ENCODE measurements at regions of chr7 and their contacts with region 1.

Region 1: GRCh38 chr7:47724335-47724982 is 142.5 kb upstream of the TNS3 start:
- DNase-seq: peak; percentile 77
- H3K4me3 Mint-ChIP-seq: peak overlapping the region; percentile 14
- H3K27ac Mint-ChIP-seq: peak overlapping the region; percentile 68
- H3K4me1 Mint-ChIP-seq: peaks cover 51% of the 10 kb centered on the region
- H3K27me3 Mint-ChIP-seq: no peaks in the 10 kb centered on the region
- CTCF ChIP-seq: no peak

Region 2: GRCh38 chr7:47581806-47582763 is 142.4 kb before region 1 on chr7 and contains the start of gene TNS3:
- CTCF ChIA-PET with region 1: no interaction called
- intact Hi-C with region 1: loop called (anchors 2 kb)
- DNase-seq: peak; percentile 86
- H3K4me3 Mint-ChIP-seq: peak within 1 kb of the TSS; percentile 100
- H3K27ac Mint-ChIP-seq: peak within 1 kb of the TSS; percentile 88
- H3K4me1 Mint-ChIP-seq: peaks cover 55% of the 10 kb centered on the region
- H3K27me3 Mint-ChIP-seq: no peaks in the 10 kb centered on the region
- CTCF ChIP-seq: peak; percentile 36
- total RNA-seq, gene TNS3: 102 and 135 TPM in 2 replicates

Region 3: GRCh38 chr7:47605816-47606575 is 118.5 kb before region 1 on chr7:
- CTCF ChIA-PET with region 1: interaction called, 4 read pairs
- intact Hi-C with region 1: loop called (anchors 1 kb)
- DNase-seq: no peak
- H3K4me3 Mint-ChIP-seq: no peak overlapping the region
- H3K27ac Mint-ChIP-seq: peak overlapping the region; percentile 88
- H3K4me1 Mint-ChIP-seq: peaks cover 67% of the 10 kb centered on the region
- H3K27me3 Mint-ChIP-seq: no peaks in the 10 kb centered on the region
- CTCF ChIP-seq: no peak

Region 4: DNA sequence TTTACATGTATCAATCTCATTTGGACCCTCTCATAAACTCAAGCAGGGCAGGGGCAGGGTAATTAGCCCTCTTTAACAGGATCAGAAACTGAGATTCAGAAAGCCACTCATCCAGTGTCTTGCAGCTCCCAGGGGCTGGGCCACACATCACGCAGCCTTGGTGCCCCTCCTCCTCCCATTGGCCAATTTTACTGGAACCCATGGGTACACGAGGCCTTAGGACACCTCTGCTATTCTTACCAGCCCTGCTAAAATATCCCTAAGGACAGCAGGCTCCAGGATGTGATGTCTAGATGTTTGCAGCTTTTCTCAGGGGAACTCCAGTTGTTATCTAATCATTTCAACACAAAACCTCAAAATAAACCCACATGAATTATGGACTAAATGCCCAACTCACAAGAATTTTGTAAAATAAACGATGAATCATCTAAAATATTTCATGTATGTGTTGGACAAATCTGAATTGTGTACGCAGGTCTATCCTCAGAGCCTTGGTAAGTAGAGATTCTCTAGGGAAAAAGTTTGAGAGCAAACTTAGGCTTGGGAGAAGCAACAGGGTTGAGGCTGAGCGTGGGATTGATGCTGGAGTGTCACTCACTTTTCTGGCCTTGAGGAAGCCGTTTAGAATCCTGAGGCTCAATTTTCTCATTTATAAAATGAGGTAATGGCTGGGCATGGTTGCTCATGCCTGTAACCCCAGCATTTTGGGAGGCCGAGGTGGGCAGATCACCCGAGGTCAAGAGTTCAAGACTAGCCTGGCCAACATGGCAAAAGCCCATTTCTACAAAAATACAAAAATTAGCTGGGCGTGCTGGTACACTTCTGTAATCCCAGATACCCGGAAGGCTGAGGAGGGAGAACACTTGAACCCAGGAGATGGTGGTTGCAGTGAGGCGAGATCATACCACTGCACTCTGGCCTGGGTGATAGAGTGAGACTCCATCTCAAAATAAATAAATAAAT is 72.8 kb before region 1 on chr7:
- CTCF ChIA-PET with region 1: no interaction called
- intact Hi-C with region 1: loop called (anchors 5 kb)
- DNase-seq: peak; percentile 30
- H3K4me3 Mint-ChIP-seq: no peak overlapping the region
- H3K27ac Mint-ChIP-seq: no peak overlapping the region
- H3K4me1 Mint-ChIP-seq: peaks cover 25% of the 10 kb centered on the region
- H3K27me3 Mint-ChIP-seq: no peaks in the 10 kb centered on the region
- CTCF ChIP-seq: no peak

Region 5: GRCh38 chr7:47710201-47710935 is 14.1 kb before region 1 on chr7:
- CTCF ChIA-PET with region 1: no interaction called
- intact Hi-C with region 1: no loop called
- DNase-seq: no peak
- H3K4me3 Mint-ChIP-seq: no peak overlapping the region
- H3K27ac Mint-ChIP-seq: no peak overlapping the region
- H3K4me1 Mint-ChIP-seq: no peaks in the 10 kb centered on the region
- H3K27me3 Mint-ChIP-seq: no peaks in the 10 kb centered on the region
- CTCF ChIP-seq: no peak

Region 6: GRCh38 chr7:47763063-47763974 is 38.9 kb after region 1 on chr7:
- CTCF ChIA-PET with region 1: interaction called, 5 read pairs
- intact Hi-C with region 1: loop called (anchors 2 kb)
- DNase-seq: peak; percentile 78
- H3K4me3 Mint-ChIP-seq: peak overlapping the region; percentile 15
- H3K27ac Mint-ChIP-seq: peak overlapping the region; percentile 86
- H3K4me1 Mint-ChIP-seq: peaks cover 54% of the 10 kb centered on the region
- H3K27me3 Mint-ChIP-seq: no peaks in the 10 kb centered on the region
- CTCF ChIP-seq: no peak

Region 7: DNA sequence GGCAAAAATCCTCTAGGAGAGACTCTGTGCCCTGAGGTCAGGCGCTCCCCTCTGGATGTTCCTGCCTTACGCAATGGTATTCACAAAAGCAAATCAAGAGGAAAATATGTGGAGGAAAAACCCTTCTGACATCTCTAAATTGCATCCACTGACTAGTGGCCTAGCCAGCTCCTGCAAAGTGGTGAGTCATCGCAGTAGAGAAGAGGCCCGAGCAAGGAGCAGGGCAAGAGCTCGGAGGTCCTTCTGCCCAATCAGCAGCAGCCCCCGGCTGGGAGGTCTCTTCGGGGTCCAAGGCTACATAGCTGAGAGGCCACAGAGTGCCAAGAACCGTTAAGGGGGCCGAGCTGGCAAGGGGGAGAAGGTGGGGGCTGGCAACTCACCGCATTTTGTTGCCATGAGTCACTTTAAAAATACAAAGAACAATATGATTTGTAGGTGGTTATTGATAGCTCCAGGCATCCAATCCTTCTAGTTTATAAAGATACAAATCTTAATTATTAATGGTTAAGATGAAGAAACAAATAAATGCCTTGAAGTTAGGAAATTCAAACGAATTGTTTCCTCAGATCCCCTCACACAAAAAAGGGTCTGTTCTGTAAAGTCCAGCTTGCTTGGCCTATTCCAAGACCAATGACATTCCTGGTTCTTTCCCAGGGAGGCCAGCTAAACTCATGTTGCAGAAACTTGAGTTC is 62.2 kb after region 1 on chr7:
- CTCF ChIA-PET with region 1: interaction called, 5 read pairs
- intact Hi-C with region 1: loop called (anchors 2 kb)
- DNase-seq: peak; percentile 99
- H3K4me3 Mint-ChIP-seq: peak overlapping the region; percentile 34
- H3K27ac Mint-ChIP-seq: peak overlapping the region; percentile 87
- H3K4me1 Mint-ChIP-seq: peaks cover 73% of the 10 kb centered on the region
- H3K27me3 Mint-ChIP-seq: no peaks in the 10 kb centered on the region
- CTCF ChIP-seq: no peak